Dorsolateral prefrontal cortex (tissue), 120 donors: ENCODE measurements at regions of chr18 and their contacts with region 1.

Region 1: GRCh38 chr18:46173393-46174341 is 69.5 kb downstream of the HAUS1 start:
- DNase-seq: peak; percentile 85 to 94 (median 92)
- H3K4me3 ChIP-seq: peak overlapping the region; percentile 77 to 100 (median 96)
- H3K27ac ChIP-seq: peak overlapping the region; percentile 48 to 98 (median 93)
- H3K27me3 ChIP-seq: no peaks in the 10 kb centered on the region
- CTCF ChIP-seq: peak; percentile 43 to 94 (median 74)

Region 2: DNA sequence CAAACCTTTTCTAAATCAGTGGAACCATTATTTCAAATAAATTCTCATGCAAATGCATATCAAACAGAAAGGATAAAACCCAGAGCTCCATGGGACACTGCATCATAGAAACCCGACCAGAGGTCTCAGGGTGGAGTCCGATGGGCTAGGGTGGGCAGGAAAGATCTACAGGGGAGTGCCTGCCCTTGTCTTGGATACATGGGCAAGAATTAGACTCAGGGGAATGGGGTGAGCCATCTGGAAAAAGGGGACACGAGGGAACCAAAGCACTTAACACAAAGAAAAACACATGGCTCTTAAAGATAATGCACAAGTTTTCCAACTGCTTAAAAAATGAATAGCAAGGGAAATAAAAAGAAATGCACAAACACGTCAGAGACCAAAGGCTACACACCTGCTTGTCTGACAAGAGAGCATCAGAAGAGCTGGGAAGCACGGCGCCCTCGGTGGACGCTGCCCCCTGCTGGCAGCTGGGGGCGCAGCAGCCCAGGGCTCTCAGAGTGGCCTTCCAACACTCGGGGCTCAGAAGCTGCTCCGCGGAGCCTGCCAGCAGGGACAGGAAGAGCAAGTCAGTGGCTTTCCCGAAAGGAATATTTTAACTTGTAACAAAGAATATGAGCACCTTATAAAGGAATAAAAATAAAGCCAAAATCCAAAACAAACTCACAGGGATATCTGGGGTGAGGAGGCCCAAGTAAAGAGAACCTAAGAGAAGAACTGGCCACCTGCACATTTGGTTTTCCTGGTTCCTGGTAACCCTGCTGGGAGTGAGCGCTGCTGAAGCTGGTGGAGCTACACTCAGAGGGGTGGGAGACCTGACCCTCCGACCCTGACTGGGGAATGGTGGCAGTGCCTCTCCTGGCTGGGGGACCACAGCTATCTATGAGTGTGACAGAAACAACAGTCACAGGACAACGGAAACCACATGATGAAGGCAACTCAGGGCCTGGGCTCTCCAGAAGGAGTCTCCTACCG is 293.7 kb before region 1 on chr18:
- intact Hi-C with region 1: no loop called
- DNase-seq: peak; percentile 33 to 80 (median 50)
- H3K4me3 ChIP-seq: no peak overlapping the region
- H3K27ac ChIP-seq: no peak overlapping the region
- H3K27me3 ChIP-seq: no peaks in the 10 kb centered on the region
- CTCF ChIP-seq: peak; percentile 77 to 99 (median 97)

Region 3: DNA sequence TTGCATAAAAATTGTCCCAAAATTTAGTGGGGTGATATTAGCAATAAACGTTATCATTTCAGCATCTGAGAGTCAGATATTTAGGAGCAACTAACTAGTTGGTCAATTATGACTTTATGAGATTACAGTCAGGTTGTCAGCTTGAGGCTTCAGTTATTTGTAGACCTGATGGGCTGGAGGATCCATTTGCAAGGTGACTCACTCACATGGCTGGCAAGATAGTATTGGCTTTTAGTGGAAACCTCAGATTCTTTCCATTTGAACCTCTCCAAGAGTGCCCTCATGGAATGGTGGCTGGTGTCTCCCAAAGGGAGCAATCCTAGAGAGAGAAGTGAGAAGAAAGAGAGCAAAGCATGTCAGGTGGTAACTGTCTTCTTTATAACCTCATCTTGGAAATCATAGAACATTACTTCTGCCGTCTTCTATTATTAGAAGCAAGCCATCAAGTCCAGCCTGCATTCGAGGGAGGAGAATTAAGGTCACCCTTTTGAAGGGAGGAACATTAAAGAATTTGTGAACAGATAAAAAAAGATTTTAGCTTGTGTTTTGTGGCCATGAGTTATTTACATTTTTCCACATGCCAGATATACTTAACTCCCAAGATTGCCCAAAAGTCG is 23.1 kb after region 1 on chr18:
- intact Hi-C with region 1: no loop called
- DNase-seq: no peak
- H3K4me3 ChIP-seq: no peak overlapping the region
- H3K27ac ChIP-seq: no peak overlapping the region
- H3K27me3 ChIP-seq: no peaks in the 10 kb centered on the region
- CTCF ChIP-seq: no peak

Region 4: DNA sequence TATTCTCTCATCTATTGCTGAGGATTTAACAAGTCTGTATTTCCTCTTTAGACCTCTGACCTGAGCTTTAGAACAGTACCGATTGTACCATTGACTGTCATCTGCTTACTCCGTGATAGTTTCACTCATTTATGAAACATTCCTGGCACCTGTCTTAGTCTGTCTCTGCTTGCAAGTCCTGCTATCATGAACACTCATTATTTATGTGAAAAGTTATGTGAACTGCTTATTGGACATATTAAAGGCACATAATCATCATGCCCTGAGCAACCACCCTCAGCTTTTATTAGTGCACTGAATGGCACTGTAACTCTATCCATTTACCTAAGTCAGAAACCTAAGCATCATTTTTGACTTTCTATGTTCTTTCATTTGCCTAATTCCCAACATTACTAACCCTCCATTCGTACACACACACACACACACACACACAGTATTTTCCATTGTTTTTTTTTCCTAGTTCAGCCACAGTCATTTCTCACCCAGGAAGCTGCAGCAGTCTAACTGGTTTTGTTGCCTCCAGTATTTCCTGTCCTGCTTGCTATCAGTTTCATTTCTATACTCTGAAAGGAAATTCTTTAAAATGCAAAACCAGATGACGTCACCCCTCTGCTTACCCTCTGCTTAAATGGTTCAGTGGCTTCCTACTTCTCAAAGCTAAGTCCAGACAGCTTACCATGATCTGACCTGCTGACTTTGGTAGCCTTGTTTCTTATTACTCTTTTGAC is 76.6 kb after region 1 on chr18:
- intact Hi-C with region 1: loop called in 1 of 2 experiments (anchors 10 kb)
- DNase-seq: no peak
- H3K4me3 ChIP-seq: peak overlapping the region in 3 of 59 donors; percentile 5 to 11 (median 9)
- H3K27ac ChIP-seq: peak overlapping the region in 21 of 59 donors; percentile 3 to 65 (median 39)
- H3K27me3 ChIP-seq: no peaks in the 10 kb centered on the region
- CTCF ChIP-seq: no peak

Region 5: GRCh38 chr18:46555724-46556123 is 382.1 kb after region 1 on chr18:
- intact Hi-C with region 1: loop called in 1 of 2 experiments (anchors 5 kb)
- DNase-seq: peak; percentile 5 to 81 (median 65)
- H3K4me3 ChIP-seq: no peak overlapping the region
- H3K27ac ChIP-seq: peak overlapping the region in 54 of 59 donors; percentile 6 to 94 (median 78)
- H3K27me3 ChIP-seq: no peaks in the 10 kb centered on the region
- CTCF ChIP-seq: peak in 54 of 56 donors; percentile 25 to 79 (median 60)

Region 6: DNA sequence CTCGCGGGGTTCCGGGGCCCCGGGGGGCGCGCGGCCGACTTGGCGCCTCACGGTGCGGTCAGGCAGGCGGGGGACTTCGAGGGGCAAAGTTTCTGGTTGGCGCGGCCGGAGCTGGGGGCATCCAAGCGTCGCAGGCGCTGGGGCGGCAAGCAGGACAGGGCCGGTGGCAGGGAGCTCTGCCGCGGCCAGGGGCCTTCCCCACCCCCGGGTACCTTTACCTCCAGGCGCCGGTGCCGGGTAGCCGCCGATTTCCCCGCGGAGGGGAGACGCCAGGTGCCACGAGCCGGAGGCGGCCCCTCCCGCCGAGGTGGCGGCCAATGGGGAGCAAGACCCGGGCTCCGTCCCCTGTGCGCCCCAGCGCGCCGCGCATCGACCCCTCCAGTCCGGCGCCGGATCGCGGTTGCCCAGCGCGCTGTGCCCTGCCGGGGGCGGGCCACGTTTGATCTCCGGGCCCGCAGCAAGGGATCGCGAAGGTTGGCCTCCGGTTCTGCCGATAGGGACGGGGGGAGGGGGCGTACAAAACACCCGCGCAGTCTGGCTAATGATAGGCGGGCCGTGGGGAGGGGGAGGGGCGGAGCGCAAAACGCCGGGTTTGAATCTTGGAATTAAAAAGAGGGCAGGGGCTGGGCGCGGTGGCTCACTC is 583.0 kb after region 1 on chr18 and contains the start of gene ST8SIA5:
- intact Hi-C with region 1: loop called in 1 of 2 experiments (anchors 5 kb)
- DNase-seq: peak in 4 of 10 donors; percentile 48 to 72 (median 60)
- H3K4me3 ChIP-seq: peak within 1 kb of the TSS; percentile 50 to 82 (median 69)
- H3K27ac ChIP-seq: peak within 1 kb of the TSS; percentile 35 to 93 (median 82)
- H3K27me3 ChIP-seq: peaks cover 0 to 10% (median 0%) of the 10 kb centered on the region in 45 donors
- CTCF ChIP-seq: no peak
- total RNA-seq, gene ST8SIA5: 25.8 to 115 (median 77.9) TPM

Region 7: DNA sequence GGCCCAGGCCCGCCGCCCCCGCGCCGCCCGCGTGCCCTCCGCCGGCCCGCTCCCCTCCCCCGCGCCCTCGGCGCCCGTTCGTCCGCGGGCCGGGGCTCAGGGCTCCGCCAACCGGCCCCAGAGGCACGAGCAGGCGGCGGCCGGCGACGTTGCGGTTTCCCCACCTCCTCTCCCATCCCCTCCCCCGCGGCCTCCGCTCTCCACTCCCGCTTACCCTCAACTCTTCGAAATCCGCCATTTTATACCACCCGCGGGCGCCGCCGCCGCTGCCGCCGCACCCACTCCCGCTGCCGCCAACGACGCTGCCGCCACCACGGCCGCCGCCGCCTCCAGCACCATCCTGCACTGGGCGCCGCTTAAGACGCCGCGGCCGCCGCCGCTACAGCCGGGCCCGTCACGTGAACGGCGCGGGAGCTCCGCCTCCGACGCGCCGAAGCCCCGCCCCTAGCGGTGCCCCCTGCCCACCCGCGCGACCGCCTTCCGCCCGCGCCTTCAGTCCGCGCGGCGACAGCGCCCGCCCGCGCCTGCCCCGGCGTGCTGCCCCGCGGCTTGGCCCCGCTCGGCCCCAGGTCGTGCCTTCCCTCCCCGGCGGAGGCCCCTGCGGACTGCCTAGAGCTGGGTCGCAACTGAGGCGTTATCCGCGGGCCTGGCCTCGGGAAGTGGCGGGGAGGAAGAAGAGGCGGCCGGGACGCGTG is 743.6 kb after region 1 on chr18 and contains the starts of genes KATNAL2 and PIAS2:
- intact Hi-C with region 1: loop called (anchors 5 to 10 kb)
- DNase-seq: peak; percentile 68 to 91 (median 81)
- H3K4me3 ChIP-seq: peak within 1 kb of the TSS; percentile 43 to 93 (median 79)
- H3K27ac ChIP-seq: peak within 1 kb of the TSS; percentile 55 to 97 (median 93)
- H3K27me3 ChIP-seq: no peaks in the 10 kb centered on the region
- CTCF ChIP-seq: peak in 23 of 56 donors; percentile 15 to 61 (median 35)
- total RNA-seq, gene KATNAL2: 6.5 to 35.7 (median 17.6) TPM
- total RNA-seq, gene PIAS2: 56.7 to 117 (median 80.3) TPM